Heart left ventricle (tissue), 16 donors: ENCODE measurements at regions of chr10 and their contacts with region 1.

Region 1: GRCh38 chr10:92087750-92088395 is 164.3 kb downstream of the BTAF1 start:
- DNase-seq: peak in 4 of 5 donors; percentile 57 to 71 (median 66)
- ATAC-seq: peak; percentile 93 to 94 (median 94)
- H3K4me3 ChIP-seq: no peak overlapping the region
- H3K27ac ChIP-seq: peak overlapping the region in 6 of 12 donors; percentile 19 to 49 (median 36)
- H3K4me1 ChIP-seq: peaks cover 0 to 38% (median 12%) of the 10 kb centered on the region in 12 donors
- H3K27me3 ChIP-seq: no peaks in the 10 kb centered on the region
- CTCF ChIP-seq: peak; percentile 58 to 87 (median 76)
- POLR2A ChIP-seq: no peak

Region 2: DNA sequence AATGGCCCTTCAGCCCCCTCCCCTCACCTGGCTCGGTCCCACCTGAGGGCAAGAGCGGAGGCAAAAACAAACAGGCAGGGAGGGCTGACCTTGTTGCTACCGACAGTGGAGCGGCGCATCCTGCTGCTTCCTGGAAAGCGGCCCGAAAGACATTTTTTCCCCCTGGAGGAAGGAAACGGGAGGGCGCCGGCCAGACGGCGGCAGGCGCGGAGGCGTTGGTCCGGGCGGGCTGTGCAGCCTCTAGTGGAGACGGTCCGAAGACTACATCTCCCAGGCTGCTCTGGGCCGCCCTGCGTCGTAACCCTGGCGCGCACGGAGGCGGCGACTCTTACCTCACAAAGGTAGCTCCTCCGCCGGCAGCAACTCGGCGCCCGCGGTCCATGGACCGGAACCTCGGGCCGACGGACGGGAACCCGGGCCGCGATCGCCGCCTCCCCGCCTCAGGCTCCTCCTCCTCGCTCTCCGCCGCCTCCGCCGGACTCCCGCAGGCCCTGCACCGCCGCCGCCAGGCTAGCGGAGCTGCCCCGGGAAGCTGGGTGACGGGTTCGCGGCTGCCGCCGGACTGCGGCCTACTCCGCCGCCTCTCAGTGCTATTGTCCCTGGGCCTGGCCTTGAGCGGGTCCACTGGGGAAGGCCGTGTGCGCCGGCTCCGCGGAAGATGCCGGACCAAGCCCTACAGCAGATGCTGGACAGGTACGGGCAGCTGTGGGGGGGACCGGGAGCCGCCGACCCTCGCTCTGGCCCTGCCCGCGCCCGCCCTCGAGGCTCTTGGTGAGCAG is 203.2 kb after region 1 on chr10 and contains the starts of genes CPEB3 and MARCHF5:
- intact Hi-C with region 1: loop called (anchors 2 to 10 kb)
- DNase-seq: peak; percentile 97 to 98 (median 98)
- ATAC-seq: peak; percentile 99 to 100 (median 99)
- H3K4me3 ChIP-seq: peak within 1 kb of the TSS; percentile 68 to 99 (median 93)
- H3K27ac ChIP-seq: peak within 1 kb of the TSS; percentile 83 to 99 (median 96)
- H3K4me1 ChIP-seq: peaks cover 0 to 29% (median 14%) of the 10 kb centered on the region in 12 donors
- H3K27me3 ChIP-seq: no peaks in the 10 kb centered on the region
- CTCF ChIP-seq: peak; percentile 48 to 75 (median 62)
- POLR2A ChIP-seq: peak in 1 of 2 donors; percentile 79
- total RNA-seq, gene CPEB3: 6.2 to 17.2 (median 10.1) TPM
- total RNA-seq, gene MARCHF5: 14.8 to 55.7 (median 29.4) TPM